ENCODE measurements at regions of chr17 and their contacts with region 1.

Region 1: DNA sequence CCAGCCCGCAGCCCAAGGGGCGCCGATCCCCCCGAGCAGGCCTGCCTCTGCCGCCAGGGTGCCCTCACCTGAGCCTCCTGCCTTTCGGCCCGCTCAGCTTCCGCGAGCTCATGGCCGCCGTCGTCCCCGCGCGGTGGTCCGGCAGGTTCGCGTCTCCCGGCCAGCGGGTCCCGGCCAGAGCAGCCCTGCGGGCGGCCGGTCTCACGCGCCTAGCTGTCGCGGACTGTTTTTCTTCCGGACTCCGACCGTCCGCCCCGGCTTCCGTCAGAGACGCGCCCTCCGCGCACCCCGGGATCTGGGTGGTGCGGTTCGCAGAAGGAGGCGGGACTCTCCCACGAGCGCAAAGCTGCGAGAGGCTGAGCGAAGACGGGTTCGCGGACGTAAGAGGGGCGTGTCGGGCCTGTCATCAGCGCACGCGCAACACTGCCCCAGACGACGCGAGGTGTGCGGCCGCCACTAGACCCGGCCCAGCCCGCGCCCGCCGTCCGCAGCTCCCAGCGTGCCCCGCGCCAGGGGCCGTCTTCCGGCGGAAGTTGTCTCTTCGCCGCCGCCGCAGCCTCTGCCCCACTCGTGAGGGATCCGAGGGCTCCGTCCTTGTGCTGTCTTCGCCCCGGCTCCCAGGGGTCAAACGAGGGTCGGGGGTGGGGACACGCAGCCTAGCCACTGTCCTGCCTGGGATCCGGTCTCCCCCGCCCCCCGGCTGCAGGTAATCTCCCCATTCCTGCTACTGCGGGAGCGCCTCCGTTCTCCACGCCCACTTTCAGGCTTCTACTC is at the start of gene INPP5K:
- DNase-seq: peak; percentile 90 to 98
- H3K4me3 ChIP-seq: peak within 1 kb of the TSS; percentile 87 to 98
- H3K27ac ChIP-seq: peak within 1 kb of the TSS; percentile 94 to 95
- H3K4me1 ChIP-seq: peaks cover 15 to 18% of the 10 kb centered on the region in 2 donors
- H3K27me3 ChIP-seq: no peaks in the 10 kb centered on the region
- CTCF ChIP-seq: no peak
- total RNA-seq, gene INPP5K: 73.7 TPM

Region 2: DNA sequence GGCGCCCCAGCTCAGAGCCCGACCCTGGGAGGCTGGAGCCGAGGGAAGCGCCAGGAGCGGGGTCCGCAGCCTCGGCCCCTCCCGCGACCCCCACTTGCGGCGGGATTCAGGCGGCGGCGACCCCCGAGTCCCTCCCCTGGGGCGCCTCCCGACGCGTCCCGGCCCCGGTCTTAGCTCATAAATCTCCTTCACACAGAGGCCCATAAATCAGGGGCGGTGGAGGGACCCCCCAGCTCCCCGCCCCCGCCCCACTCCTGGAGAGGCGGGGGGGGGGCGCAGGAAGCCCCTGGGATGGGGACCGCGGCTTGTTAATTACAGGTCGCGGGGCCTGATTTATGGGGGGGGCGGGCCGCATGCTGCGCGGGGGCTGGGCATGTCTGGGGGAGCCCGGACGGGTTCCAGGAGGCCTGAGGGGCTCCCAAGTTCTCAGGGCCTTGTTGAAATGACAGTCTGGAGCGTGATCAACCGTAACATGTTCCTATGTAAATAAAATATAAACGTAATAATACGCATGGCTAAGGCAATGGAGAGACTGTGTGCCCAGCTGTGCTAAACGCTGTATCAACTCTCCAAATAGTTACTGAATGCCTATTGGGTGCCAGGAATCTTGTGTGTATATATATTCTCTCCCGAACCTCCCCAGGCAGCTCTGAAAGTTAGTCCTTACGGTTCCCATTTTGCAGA is 256.3 kb before region 1 on chr17:
- intact Hi-C with region 1: loop called (anchors 2 kb)
- DNase-seq: no peak
- H3K4me3 ChIP-seq: peak overlapping the region; percentile 53 to 69
- H3K27ac ChIP-seq: no peak overlapping the region
- H3K4me1 ChIP-seq: peaks cover 4 to 6% of the 10 kb centered on the region in 2 donors
- H3K27me3 ChIP-seq: no peaks in the 10 kb centered on the region
- CTCF ChIP-seq: no peak

Region 3: DNA sequence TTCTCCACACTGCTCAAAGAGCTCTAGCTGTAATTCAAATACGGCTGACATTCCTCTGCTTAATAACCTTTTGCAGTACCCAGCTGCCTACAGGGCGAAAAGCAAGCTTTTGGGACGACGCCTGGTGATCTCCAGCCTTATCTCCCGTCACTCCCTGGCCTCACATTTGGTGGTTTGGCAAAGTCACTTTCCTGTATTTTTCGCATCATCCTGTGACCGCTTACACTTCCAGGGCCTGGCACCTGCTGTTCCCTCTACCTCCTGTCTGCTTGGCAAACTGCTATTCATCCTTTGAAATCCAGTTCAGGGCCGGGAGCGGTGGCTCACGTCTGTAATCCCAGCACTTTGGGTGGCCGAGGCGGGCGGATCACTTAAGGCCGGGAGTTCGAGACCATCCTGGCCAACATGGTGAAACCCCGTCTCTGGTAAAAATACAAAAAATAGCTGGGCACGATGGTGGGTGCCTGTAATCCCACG is 249.1 kb before region 1 on chr17:
- intact Hi-C with region 1: loop called (anchors 2 kb)
- DNase-seq: peak in 1 of 2 donors; percentile 77
- H3K4me3 ChIP-seq: peak overlapping the region; percentile 74 to 75
- H3K27ac ChIP-seq: peak overlapping the region; percentile 93 to 94
- H3K4me1 ChIP-seq: peaks cover 0 to 6% of the 10 kb centered on the region in 2 donors
- H3K27me3 ChIP-seq: no peaks in the 10 kb centered on the region
- CTCF ChIP-seq: no peak

Region 4: GRCh38 chr17:1365445-1366039 is 151.0 kb before region 1 on chr17:
- intact Hi-C with region 1: loop called (anchors 1 kb)
- DNase-seq: peak in 1 of 2 donors; percentile 70
- H3K4me3 ChIP-seq: peak overlapping the region; percentile 14 to 24
- H3K27ac ChIP-seq: peak overlapping the region in 1 of 2 donors; percentile 32
- H3K4me1 ChIP-seq: peaks cover 12 to 57% of the 10 kb centered on the region in 2 donors
- H3K27me3 ChIP-seq: no peaks in the 10 kb centered on the region
- CTCF ChIP-seq: peak; percentile 78 to 84 (median 81)

Region 5: GRCh38 chr17:1455797-1456599 is 60.6 kb before region 1 on chr17 and contains the start of gene CRK:
- intact Hi-C with region 1: loop called (anchors 1 kb)
- DNase-seq: peak; percentile 77 to 98
- H3K4me3 ChIP-seq: peak within 1 kb of the TSS; percentile 75 to 99
- H3K27ac ChIP-seq: peak within 1 kb of the TSS; percentile 88 to 99
- H3K4me1 ChIP-seq: peaks cover 16 to 39% of the 10 kb centered on the region in 2 donors
- H3K27me3 ChIP-seq: no peaks in the 10 kb centered on the region
- CTCF ChIP-seq: no peak
- total RNA-seq, gene CRK: 83.4 TPM

Region 6: GRCh38 chr17:1488030-1488863 is 28.3 kb before region 1 on chr17:
- intact Hi-C with region 1: loop called (anchors 1 kb)
- DNase-seq: peak; percentile 33 to 95
- H3K4me3 ChIP-seq: peak overlapping the region; percentile 93 to 95
- H3K27ac ChIP-seq: peak overlapping the region; percentile 90 to 99
- H3K4me1 ChIP-seq: peaks cover 16 to 55% of the 10 kb centered on the region in 2 donors
- H3K27me3 ChIP-seq: no peaks in the 10 kb centered on the region
- CTCF ChIP-seq: peak in 1 of 3 experiments; percentile 5

Region 7: DNA sequence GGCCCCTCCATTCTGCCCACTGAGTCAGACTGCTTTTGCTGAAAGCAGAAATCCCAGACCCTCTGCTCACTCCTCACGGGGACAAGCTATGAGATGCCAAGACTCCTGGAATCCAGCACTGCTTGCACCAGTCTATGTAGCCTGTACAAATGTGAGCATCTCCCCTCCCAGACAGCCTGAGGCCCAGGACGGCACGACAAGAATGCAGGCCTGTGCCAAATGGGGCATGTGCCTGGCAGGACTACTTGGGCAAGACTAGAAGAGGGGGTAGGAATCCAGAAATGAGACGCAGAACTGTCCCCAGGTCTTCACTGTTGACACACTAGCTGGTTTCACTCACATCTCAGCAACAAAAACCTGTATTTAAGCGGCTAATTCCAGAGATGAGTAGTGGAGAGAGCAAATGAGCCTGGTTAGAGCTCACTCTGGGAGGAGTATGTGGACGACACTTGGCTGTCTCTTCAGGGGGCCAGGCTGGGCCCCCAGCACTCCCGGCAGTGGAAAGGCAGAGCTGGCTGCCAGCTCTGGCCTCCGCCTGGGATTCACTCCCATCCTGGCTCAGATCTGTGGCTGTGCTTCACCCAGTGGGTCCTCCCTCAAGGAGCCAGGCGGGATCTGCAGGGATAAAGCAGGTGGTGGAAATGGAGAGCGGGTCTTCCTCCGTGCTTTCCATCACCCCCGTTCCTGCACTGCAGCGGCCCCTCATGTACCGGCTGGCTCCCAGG is 21.1 kb before region 1 on chr17:
- intact Hi-C with region 1: loop called (anchors 1 kb)
- DNase-seq: peak in 1 of 2 donors; percentile 88
- H3K4me3 ChIP-seq: peak overlapping the region in 1 of 2 donors; percentile 10
- H3K27ac ChIP-seq: peak overlapping the region; percentile 95 to 99
- H3K4me1 ChIP-seq: peaks cover 29 to 47% of the 10 kb centered on the region in 2 donors
- H3K27me3 ChIP-seq: no peaks in the 10 kb centered on the region
- CTCF ChIP-seq: no peak

Measured in ascending aorta (tissue), 2 donors.